K562 (cell line): ENCODE measurements at regions of chr12 and their contacts with region 1.

Region 1: DNA sequence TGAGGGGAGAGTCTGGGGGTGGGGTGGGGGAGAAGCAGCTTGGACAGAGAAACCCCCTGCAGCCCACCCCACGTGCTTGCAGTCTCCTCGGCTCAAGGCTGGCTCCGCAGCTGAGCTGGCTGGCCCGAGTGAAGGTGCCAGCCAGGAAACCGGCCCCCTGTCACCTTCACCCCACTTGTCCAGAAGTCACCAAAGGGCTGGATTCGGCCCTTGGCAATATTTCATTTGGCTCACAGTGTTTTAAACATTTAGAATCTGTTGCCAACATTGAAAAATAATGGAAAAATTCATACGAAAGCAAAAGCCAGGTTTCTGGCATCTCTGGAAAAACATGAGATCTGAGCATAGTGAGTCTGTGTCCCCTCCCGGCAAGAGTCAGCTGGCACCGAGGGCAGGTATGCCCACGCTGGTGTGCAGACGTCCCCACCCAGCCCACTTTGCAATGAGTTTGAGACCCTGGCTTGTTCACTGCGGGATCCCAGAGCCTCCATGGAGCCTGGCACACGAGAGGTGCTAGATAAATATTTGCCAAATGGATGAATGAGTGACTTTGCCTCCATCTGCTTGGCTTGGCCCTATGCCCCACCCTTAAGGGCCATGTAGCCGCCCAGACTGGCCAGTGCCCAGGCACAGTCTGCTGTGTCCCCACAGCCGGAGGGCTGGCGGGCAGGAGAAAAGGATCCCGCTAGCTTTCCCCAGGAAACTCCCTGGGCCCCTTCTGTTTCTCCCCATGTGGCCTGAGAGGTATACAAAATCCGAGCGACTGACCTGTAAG is 18.2 kb downstream of the MSI1 start:
- DNase-seq: no peak
- ATAC-seq: no peak
- H3K4me3 ChIP-seq: no peak overlapping the region
- H3K27ac ChIP-seq: no peak overlapping the region
- H3K4me1 ChIP-seq: peaks cover 0 to 8% of the 10 kb centered on the region in 2 experiments; a peak in 1 of 5 replicates
- H3K27me3 ChIP-seq: peaks cover 25 to 47% of the 10 kb centered on the region in 2 experiments; a peak in 4 of 5 replicates
- CTCF ChIP-seq: no peak
- EP300 ChIP-seq: no peak
- POLR2A ChIP-seq: no peak
- RAD21 ChIP-seq: no peak

Region 2: GRCh38 chr12:120067084-120067869 is 283.5 kb before region 1 on chr12:
- CTCF ChIA-PET with region 1: no interaction called
- POLR2A ChIA-PET with region 1: no interaction called
- in situ Hi-C with region 1: no loop called
- intact Hi-C with region 1: no loop called
- DNase-seq: no peak
- ATAC-seq: no peak
- H3K4me3 ChIP-seq: no peak overlapping the region
- H3K27ac ChIP-seq: no peak overlapping the region
- H3K4me1 ChIP-seq: no peaks in the 10 kb centered on the region; a peak in 1 of 5 replicates
- H3K27me3 ChIP-seq: peaks cover 43 to 58% of the 10 kb centered on the region in 2 experiments
- CTCF ChIP-seq: no peak
- EP300 ChIP-seq: no peak
- POLR2A ChIP-seq: no peak
- RAD21 ChIP-seq: no peak

Region 3: GRCh38 chr12:120669055-120669840 is 318.5 kb after region 1 on chr12:
- CTCF ChIA-PET with region 1: no interaction called
- POLR2A ChIA-PET with region 1: no interaction called
- in situ Hi-C with region 1: loop called (anchors 25 kb)
- intact Hi-C with region 1: no loop called
- DNase-seq: no peak
- ATAC-seq: no peak
- H3K4me3 ChIP-seq: no peak overlapping the region
- H3K27ac ChIP-seq: no peak overlapping the region
- H3K4me1 ChIP-seq: peaks cover 0 to 8% of the 10 kb centered on the region in 2 experiments; a peak in 2 of 5 replicates
- H3K27me3 ChIP-seq: peaks cover 31 to 75% of the 10 kb centered on the region in 2 experiments; a peak in 4 of 5 replicates
- CTCF ChIP-seq: no peak
- EP300 ChIP-seq: no peak
- POLR2A ChIP-seq: no peak
- RAD21 ChIP-seq: no peak